Activated CD4-positive, alpha-beta memory T cell treated with anti-CD3 and anti-CD28 coated beads for 36 hours (primary cell): ENCODE measurements at regions of chr2 and their contacts with region 1.

Region 1: GRCh38 chr2:216404010-216404618 is 8.2 kb upstream of the SMARCAL1 start:
- DNase-seq: peak; percentile 62
- H3K4me3 Mint-ChIP-seq: no peak overlapping the region
- H3K27ac Mint-ChIP-seq: no peak overlapping the region
- H3K4me1 Mint-ChIP-seq: no peaks in the 10 kb centered on the region
- H3K27me3 Mint-ChIP-seq: peaks cover 2% of the 10 kb centered on the region

Region 2: GRCh38 chr2:216151313-216152030 is 252.6 kb before region 1 on chr2:
- CTCF ChIA-PET with region 1: interaction called, 11 read pairs
- POLR2A ChIA-PET with region 1: no interaction called
- intact Hi-C with region 1: loop called (anchors 5 kb)
- DNase-seq: no peak
- H3K4me3 Mint-ChIP-seq: no peak overlapping the region
- H3K27ac Mint-ChIP-seq: peak overlapping the region; percentile 14
- H3K4me1 Mint-ChIP-seq: peaks cover 35% of the 10 kb centered on the region
- H3K27me3 Mint-ChIP-seq: no peaks in the 10 kb centered on the region

Region 3: GRCh38 chr2:216215658-216216390 is 188.3 kb before region 1 on chr2:
- CTCF ChIA-PET with region 1: interaction called, 33 read pairs
- POLR2A ChIA-PET with region 1: no interaction called
- intact Hi-C with region 1: no loop called
- DNase-seq: no peak
- H3K4me3 Mint-ChIP-seq: no peak overlapping the region
- H3K27ac Mint-ChIP-seq: no peak overlapping the region
- H3K4me1 Mint-ChIP-seq: peaks cover 25% of the 10 kb centered on the region
- H3K27me3 Mint-ChIP-seq: no peaks in the 10 kb centered on the region

Region 4: DNA sequence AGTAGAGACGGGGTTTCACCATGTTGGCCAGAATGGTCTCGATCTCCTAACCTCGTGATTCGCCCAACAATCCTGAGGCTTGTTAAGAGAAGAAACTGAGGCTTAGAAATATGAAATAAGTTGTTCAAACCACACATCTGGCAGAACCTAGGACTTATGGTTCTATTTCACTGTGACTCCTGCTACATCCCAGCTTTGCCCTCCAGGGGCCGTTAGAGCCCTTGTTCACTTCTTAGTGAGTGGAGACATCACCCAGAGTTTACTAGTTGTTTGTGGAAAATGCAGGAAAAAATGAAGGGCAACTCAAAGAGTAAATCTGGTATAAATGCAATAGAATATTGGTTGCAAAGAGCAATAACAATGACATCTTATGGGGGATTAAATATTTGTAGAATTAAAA is 75.8 kb before region 1 on chr2:
- CTCF ChIA-PET with region 1: interaction called, 8 read pairs
- POLR2A ChIA-PET with region 1: no interaction called
- intact Hi-C with region 1: loop called (anchors 1 kb)
- DNase-seq: no peak
- H3K4me3 Mint-ChIP-seq: no peak overlapping the region
- H3K27ac Mint-ChIP-seq: no peak overlapping the region
- H3K4me1 Mint-ChIP-seq: no peaks in the 10 kb centered on the region
- H3K27me3 Mint-ChIP-seq: no peaks in the 10 kb centered on the region

Region 5: DNA sequence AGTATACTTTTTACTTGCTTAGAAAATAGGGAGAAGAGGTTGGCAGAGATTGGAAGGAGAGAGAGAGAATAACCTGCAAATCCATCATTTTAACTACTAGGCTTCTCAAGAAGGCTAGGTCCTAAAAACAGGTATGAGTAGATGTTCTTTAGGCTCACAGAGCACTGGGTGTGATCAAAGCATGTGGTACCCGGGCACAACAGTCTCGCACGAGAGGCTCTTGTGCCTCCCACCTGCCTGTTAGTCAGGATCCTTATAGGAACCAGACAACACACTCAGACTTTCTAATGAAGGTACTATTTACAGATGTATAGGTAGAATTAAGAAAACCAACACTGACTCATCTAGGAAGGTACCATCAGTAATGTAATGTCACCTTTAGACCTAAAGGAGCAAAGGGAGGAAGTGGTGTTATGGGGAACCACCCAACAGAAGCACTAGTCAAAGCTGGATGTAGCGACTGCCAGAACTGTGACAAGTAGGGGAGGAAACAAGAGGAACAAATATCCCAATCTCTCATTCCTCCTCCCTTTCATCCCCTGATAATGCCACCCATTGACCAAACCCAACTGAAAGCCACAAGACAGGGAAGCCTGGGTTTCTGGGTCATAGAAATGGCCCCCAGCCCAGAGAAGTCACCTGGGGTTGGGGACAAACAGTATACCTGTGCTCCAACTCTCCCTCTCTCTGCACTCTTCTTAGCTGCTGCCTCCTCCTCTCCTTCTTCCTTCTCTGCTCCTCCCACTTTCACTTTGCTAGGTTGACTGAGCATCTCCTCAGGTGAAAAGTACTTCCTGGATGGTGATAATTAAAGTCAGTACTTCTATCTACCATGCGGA is 15.8 kb before region 1 on chr2:
- CTCF ChIA-PET with region 1: interaction called, 12 read pairs
- POLR2A ChIA-PET with region 1: no interaction called
- intact Hi-C with region 1: no loop called
- DNase-seq: peak; percentile 52
- H3K4me3 Mint-ChIP-seq: no peak overlapping the region
- H3K27ac Mint-ChIP-seq: peak overlapping the region; percentile 40
- H3K4me1 Mint-ChIP-seq: peaks cover 16% of the 10 kb centered on the region
- H3K27me3 Mint-ChIP-seq: no peaks in the 10 kb centered on the region